WTC11 (cell line): ENCODE measurements at regions of chr9 and their contacts with region 1.

Region 1: GRCh38 chr9:89576404-89576839 is 28.4 kb upstream of the GADD45G start:
- DNase-seq: no peak
- ATAC-seq: no peak
- H3K4me3 Mint-ChIP-seq: no peak overlapping the region
- H3K27ac Mint-ChIP-seq: no peak overlapping the region
- H3K4me1 Mint-ChIP-seq: no peaks in the 10 kb centered on the region
- H3K27me3 Mint-ChIP-seq: no peaks in the 10 kb centered on the region
- CTCF ChIP-seq: peak; percentile 68

Region 2: GRCh38 chr9:89400403-89401116 is 175.9 kb before region 1 on chr9:
- CTCF ChIA-PET with region 1: no interaction called
- POLR2A ChIA-PET with region 1: no interaction called
- DNase-seq: no peak
- ATAC-seq: no peak
- H3K4me3 Mint-ChIP-seq: no peak overlapping the region
- H3K27ac Mint-ChIP-seq: no peak overlapping the region
- H3K4me1 Mint-ChIP-seq: no peaks in the 10 kb centered on the region
- H3K27me3 Mint-ChIP-seq: no peaks in the 10 kb centered on the region
- CTCF ChIP-seq: no peak

Region 3: GRCh38 chr9:89477811-89478630 is 98.4 kb before region 1 on chr9:
- CTCF ChIA-PET with region 1: no interaction called
- POLR2A ChIA-PET with region 1: no interaction called
- DNase-seq: no peak
- ATAC-seq: peak; percentile 49
- H3K4me3 Mint-ChIP-seq: no peak overlapping the region
- H3K27ac Mint-ChIP-seq: peak overlapping the region; percentile 86
- H3K4me1 Mint-ChIP-seq: peaks cover 39% of the 10 kb centered on the region
- H3K27me3 Mint-ChIP-seq: no peaks in the 10 kb centered on the region
- CTCF ChIP-seq: no peak

Region 4: DNA sequence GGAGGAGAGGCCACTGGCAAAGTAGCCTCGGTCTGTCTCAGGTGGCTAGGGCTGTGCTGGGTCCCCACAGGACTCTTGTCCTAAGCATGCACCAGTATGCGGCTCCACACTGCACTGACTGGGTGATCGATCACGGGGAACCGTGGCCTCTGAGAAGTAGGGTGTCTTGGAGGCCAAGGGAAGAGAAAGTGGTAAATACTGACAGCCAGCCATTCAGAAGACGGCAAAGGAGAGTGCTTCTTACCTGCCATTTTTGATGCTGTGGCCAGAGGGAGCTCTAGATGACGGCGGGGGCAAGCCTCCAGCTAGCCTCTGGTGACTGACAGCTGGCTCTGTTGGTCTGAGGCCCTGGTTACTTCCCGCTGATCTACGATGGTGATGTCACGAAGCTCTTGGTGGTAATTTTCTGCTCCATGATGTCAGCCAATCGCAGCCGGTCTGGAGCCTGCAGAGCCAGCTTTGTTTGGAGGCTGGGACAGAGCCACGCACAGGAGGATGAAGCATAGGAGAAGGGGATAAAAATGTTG is 12.0 kb before region 1 on chr9:
- CTCF ChIA-PET with region 1: interaction called, 14 read pairs
- POLR2A ChIA-PET with region 1: no interaction called
- DNase-seq: peak; percentile 63
- ATAC-seq: peak; percentile 98
- H3K4me3 Mint-ChIP-seq: no peak overlapping the region
- H3K27ac Mint-ChIP-seq: peak overlapping the region; percentile 46; the same call in 1 of the 2 replicates
- H3K4me1 Mint-ChIP-seq: peaks cover 14% of the 10 kb centered on the region
- H3K27me3 Mint-ChIP-seq: no peaks in the 10 kb centered on the region
- CTCF ChIP-seq: peak; percentile 29; the same call in 1 of the 2 replicates